ENCODE measurements at regions of chr6 and their contacts with region 1.

Region 1: GRCh38 chr6:40328405-40328987 is 258.7 kb downstream of the LRFN2 start:
- DNase-seq: peak; percentile 52
- H3K4me3 ChIP-seq: no peak overlapping the region
- H3K27ac ChIP-seq: no peak overlapping the region
- H3K4me1 ChIP-seq: no peaks in the 10 kb centered on the region
- H3K27me3 ChIP-seq: peaks cover 2% of the 10 kb centered on the region
- CTCF ChIP-seq: peak; percentile 94 to 96

Region 2: DNA sequence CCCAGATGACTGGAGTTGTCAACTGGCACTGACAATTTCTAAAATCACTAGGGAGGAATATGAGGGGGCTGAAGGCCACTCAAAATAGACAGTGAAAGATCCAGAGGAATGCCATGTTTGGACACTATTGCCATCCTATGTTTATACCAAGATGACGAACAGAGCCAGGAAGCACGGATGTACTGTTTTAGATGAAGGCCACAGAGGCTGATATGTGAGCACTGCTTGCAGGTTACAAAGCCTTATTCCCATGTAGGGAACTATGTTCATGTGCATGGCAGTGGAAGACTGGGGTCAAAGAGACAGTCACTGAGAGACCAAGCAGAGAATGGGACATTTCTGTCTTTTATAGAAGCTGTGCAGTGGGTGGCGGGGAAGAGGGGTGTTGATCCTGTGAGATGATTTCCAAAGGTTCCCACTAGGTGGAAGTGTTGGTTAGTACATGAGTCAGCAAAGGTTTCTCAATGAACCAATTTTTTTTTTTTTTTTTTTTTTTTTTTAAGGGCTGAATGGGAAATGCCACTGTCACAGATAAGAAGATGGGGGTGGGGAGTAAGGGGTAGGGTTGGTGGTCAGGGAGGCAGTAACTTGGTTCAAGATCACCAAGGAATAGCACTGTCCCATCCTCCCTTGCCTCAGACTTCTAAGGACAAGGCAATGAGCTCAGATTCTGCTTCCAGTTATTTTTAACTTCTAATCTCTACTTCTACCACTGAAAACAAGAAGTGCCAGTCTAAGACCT is 347.5 kb before region 1 on chr6:
- CTCF ChIA-PET with region 1: no interaction called
- dilution Hi-C with region 1: no loop called
- in situ Hi-C with region 1: no loop called
- intact Hi-C with region 1: loop called (anchors 5 kb)
- DNase-seq: peak; percentile 31
- H3K4me3 ChIP-seq: no peak overlapping the region
- H3K27ac ChIP-seq: no peak overlapping the region
- H3K4me1 ChIP-seq: no peaks in the 10 kb centered on the region
- H3K27me3 ChIP-seq: no peaks in the 10 kb centered on the region
- CTCF ChIP-seq: peak; percentile 47 to 66

Region 3: DNA sequence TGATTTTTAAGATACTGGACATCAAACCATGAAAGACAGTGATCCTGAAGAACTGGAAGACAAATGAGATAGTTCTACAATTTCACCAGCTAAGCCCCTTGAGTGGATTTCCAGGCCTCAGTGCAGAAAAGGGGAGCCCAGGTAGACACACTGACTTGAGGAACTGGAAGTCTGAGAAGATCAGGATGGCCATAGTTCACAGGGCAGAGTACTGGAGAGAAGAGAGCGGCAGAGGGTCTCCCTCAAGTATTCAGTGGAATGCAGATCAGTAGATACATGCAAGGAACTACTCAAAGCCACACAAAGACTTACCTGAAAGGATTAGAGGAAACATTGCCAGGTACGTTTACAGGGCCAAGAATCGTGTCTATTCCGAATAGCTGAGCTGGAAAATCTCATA is 34.4 kb after region 1 on chr6:
- CTCF ChIA-PET with region 1: no interaction called
- dilution Hi-C with region 1: no loop called
- in situ Hi-C with region 1: no loop called
- intact Hi-C with region 1: no loop called
- DNase-seq: no peak
- H3K4me3 ChIP-seq: no peak overlapping the region
- H3K27ac ChIP-seq: no peak overlapping the region
- H3K4me1 ChIP-seq: no peaks in the 10 kb centered on the region
- H3K27me3 ChIP-seq: peaks cover 2% of the 10 kb centered on the region
- CTCF ChIP-seq: no peak

Region 4: DNA sequence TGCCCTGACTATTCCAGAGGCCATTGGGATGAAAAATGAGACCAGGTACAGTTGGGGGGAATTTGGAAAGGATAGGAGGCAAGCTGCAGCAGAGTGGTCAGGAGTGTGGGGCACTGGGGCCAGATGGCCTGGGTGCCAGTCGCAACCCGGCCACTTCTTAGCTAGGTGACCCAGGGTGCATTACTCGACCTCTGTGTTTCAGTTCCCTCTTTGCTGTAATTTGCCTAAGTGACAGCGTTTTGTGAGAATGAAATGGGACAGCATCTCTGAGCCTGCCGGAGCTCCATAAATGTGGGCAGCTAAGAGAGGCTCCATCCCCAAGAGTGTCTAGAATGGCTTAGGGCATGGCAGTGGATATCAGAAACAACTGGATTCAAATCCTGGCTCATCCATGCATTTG is 244.7 kb after region 1 on chr6:
- CTCF ChIA-PET with region 1: no interaction called
- dilution Hi-C with region 1: loop called (anchors 5 kb)
- in situ Hi-C with region 1: loop called in 1 of 2 experiments (anchors 25 kb)
- intact Hi-C with region 1: no loop called
- DNase-seq: no peak
- H3K4me3 ChIP-seq: no peak overlapping the region
- H3K27ac ChIP-seq: no peak overlapping the region
- H3K4me1 ChIP-seq: no peaks in the 10 kb centered on the region
- H3K27me3 ChIP-seq: no peaks in the 10 kb centered on the region
- CTCF ChIP-seq: no peak

Region 5: DNA sequence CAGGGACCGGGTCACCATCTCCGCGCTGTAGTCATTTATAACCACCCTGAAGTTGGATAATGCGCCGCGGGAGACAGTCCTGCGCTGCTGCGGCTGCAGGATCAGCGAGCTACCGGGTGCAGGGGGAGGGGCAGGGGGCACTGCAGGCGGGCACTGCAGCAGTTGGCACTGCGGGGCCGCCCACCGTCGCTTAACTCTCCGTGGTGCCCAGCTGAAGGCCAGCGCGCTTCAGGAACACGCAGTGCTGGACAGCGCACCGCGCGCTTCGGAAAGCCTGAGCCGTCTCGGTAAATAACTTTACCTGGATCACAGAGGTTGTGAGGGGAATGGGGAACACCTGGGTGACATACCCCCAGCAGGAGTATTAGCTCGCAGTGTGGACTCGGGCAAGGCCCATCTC is 271.1 kb after region 1 on chr6:
- CTCF ChIA-PET with region 1: no interaction called
- dilution Hi-C with region 1: no loop called
- in situ Hi-C with region 1: loop called (anchors 10 to 25 kb)
- intact Hi-C with region 1: no loop called
- DNase-seq: peak; percentile 17
- H3K4me3 ChIP-seq: no peak overlapping the region
- H3K27ac ChIP-seq: no peak overlapping the region
- H3K4me1 ChIP-seq: no peaks in the 10 kb centered on the region
- H3K27me3 ChIP-seq: no peaks in the 10 kb centered on the region
- CTCF ChIP-seq: no peak

Region 6: DNA sequence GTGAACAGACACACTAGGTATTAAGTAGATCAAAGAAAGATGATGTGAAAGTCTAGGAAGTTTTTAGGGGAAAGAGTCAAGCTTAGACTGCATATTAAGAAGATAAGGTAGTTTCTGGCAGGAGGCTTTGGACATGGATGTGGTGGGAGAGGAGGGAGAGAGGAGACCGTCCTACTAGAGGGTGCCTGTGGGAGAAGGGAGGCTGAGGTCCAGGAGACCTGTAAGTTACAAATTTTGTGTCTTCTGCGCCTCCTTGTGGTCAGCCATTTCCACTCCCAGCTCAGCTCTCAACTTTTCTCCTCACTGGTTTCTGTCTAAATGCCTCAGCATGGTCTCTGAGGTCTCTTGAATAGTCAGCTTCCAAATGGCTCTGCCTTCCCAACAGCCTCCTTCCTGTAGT is 517.1 kb after region 1 on chr6:
- CTCF ChIA-PET with region 1: no interaction called
- dilution Hi-C with region 1: no loop called
- in situ Hi-C with region 1: loop called in 1 of 2 experiments (anchors 25 kb)
- intact Hi-C with region 1: loop called (anchors 1 kb)
- DNase-seq: peak; percentile 30
- H3K4me3 ChIP-seq: no peak overlapping the region
- H3K27ac ChIP-seq: no peak overlapping the region
- H3K4me1 ChIP-seq: no peaks in the 10 kb centered on the region
- H3K27me3 ChIP-seq: peaks cover 5% of the 10 kb centered on the region
- CTCF ChIP-seq: peak; percentile 62 to 74

Region 7: DNA sequence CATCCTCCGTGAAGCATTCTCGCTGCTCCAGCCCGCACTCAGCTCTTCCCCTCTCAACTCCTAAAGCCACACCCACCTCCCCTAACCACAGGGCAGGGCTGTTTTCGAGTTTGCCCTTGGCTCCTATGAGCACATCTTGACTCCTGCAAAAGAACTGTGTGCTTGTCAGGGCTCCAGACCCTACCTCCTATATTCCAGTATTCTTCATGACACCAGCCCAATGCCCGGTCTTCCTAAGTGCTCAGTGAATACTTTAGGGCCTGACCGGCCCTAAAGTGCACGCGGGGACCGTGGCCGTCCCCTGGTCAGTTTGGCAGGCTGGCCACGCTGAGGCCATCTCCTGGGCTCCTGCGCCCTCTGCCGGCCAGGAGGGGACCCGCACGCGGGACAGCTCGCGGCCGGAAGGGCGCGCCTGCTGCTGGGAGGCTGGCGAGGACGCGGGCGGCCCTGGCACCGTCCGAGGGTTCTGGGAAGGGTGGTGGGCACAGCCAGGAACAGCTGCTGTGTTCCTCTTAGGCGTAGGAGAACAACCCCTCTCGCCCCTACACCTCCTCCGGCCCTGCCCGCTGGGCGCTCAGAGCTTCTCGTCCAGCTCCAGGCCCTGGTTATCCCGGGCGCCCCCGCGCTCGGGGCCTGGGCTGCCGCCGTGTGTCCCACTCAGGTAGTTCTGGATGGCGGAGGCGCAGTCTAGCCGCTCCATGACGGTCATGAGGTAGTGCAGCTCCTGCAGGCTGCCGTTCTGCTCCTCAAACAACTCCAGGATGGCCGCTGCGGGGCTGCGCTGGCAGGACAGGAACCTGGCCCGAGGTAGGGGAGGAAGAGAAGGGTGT is 699.5 kb after region 1 on chr6:
- CTCF ChIA-PET with region 1: no interaction called
- dilution Hi-C with region 1: no loop called
- in situ Hi-C with region 1: loop called (anchors 25 kb)
- intact Hi-C with region 1: loop called (anchors 1 kb)
- DNase-seq: peak; percentile 63
- H3K4me3 ChIP-seq: peak overlapping the region; percentile 30 to 46 (median 45)
- H3K27ac ChIP-seq: peak overlapping the region; percentile 3
- H3K4me1 ChIP-seq: peaks cover 32% of the 10 kb centered on the region
- H3K27me3 ChIP-seq: no peaks in the 10 kb centered on the region
- CTCF ChIP-seq: peak; percentile 89 to 99

Measured in mammary epithelial cell (primary cell).